ENCODE measurements at regions of chrX and their contacts with region 1.

Region 1: DNA sequence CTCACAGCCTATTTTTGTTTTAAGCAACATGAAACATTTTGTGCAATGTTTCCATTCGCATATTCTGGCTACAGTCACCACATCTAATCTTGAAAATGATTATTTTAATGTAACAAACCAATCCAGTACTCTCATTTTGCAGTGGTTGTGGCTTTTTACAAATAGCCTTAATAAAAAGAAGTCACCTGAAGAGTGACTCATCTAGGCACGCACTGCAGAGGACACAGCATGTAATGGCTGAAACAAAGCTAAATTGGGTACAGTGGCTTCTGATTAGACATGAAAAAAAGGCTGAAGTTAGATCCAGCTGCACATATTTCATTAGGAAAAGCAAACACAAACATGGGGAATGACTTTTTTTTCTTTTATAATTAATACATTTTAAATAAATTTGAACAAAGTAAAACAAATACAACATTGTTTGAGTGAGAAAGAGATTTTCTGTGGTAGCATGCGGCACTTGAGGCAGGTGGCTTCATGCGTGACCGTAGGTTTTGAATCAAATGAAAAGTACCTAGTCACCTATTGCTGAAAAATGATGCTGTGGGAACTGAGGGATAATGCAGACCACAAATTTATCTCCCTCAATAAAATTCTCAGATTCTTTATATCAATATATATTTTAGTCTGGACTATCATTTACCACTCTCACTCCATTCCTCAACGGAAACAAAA is 240.8 kb upstream of the DDX53 start:
- DNase-seq: no peak
- ATAC-seq: peak; percentile 93
- H3K4me3 ChIP-seq: no peak overlapping the region
- H3K27ac ChIP-seq: no peak overlapping the region
- H3K4me1 ChIP-seq: no peaks in the 10 kb centered on the region
- H3K27me3 ChIP-seq: no peaks in the 10 kb centered on the region
- CTCF ChIP-seq: no peak
- EP300 ChIP-seq: peak in 1 of 2 experiments; percentile 63; a peak in 2 of 4 replicates
- POLR2A ChIP-seq: no peak
- RAD21 ChIP-seq: no peak

Region 2: GRCh38 chrX:22748093-22748999 is 10.6 kb before region 1 on chrX:
- CTCF ChIA-PET with region 1: interaction called, 19 read pairs
- POLR2A ChIA-PET with region 1: no interaction called
- RAD21 ChIA-PET with region 1: no interaction called
- SMC1A ChIA-PET with region 1: no interaction called
- in situ Hi-C with region 1: no loop called
- intact Hi-C with region 1: no loop called
- DNase-seq: no peak
- ATAC-seq: peak; percentile 96
- H3K4me3 ChIP-seq: no peak overlapping the region
- H3K27ac ChIP-seq: no peak overlapping the region
- H3K4me1 ChIP-seq: no peaks in the 10 kb centered on the region
- H3K27me3 ChIP-seq: no peaks in the 10 kb centered on the region
- CTCF ChIP-seq: peak; percentile 67 to 82 (median 80)
- EP300 ChIP-seq: no peak
- POLR2A ChIP-seq: no peak
- RAD21 ChIP-seq: peak; percentile 52

Region 3: DNA sequence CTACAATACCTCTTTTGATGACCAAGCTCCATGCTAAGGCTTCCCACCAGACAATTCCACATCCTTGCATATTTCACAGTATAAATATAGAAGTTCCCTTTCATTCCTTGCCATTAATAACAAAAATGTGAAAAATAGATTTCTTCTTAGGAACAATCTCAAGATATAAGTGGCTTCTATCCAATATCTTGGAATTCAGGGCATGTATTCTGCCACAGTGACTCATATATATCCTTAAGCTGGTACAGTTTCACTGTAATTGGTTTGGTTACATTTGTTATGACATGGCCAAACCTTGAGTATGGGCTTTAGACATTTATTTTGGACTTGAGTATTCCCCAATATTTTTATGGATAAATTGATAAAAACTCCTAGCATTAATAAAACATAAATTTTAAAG is 59.1 kb after region 1 on chrX:
- CTCF ChIA-PET with region 1: no interaction called
- POLR2A ChIA-PET with region 1: no interaction called
- RAD21 ChIA-PET with region 1: no interaction called
- SMC1A ChIA-PET with region 1: no interaction called
- in situ Hi-C with region 1: no loop called
- intact Hi-C with region 1: no loop called
- DNase-seq: no peak
- ATAC-seq: no peak
- H3K4me3 ChIP-seq: no peak overlapping the region
- H3K27ac ChIP-seq: no peak overlapping the region
- H3K4me1 ChIP-seq: no peaks in the 10 kb centered on the region
- H3K27me3 ChIP-seq: no peaks in the 10 kb centered on the region
- CTCF ChIP-seq: no peak
- EP300 ChIP-seq: no peak
- POLR2A ChIP-seq: no peak
- RAD21 ChIP-seq: no peak

Measured in GM12878 (cell line).